Colonic mucosa (tissue), 4 donors: ENCODE measurements at regions of chr2 and their contacts with region 1.

Region 1: GRCh38 chr2:41869542-41870264 is 178.1 kb upstream of the PKDCC start:
- DNase-seq: peak; percentile 84
- H3K4me3 ChIP-seq: no peak overlapping the region
- H3K27ac ChIP-seq: no peak overlapping the region
- H3K4me1 ChIP-seq: no peaks in the 10 kb centered on the region
- H3K27me3 ChIP-seq: no peaks in the 10 kb centered on the region
- CTCF ChIP-seq: peak; percentile 75

Region 2: GRCh38 chr2:41207578-41207977 is 662.1 kb before region 1 on chr2:
- intact Hi-C with region 1: no loop called
- DNase-seq: no peak
- H3K4me3 ChIP-seq: no peak overlapping the region
- H3K27ac ChIP-seq: no peak overlapping the region
- H3K4me1 ChIP-seq: no peaks in the 10 kb centered on the region
- H3K27me3 ChIP-seq: no peaks in the 10 kb centered on the region
- CTCF ChIP-seq: no peak

Region 3: GRCh38 chr2:42086500-42086953 is 216.8 kb after region 1 on chr2:
- intact Hi-C with region 1: loop called (anchors 2 kb)
- DNase-seq: peak; percentile 76
- H3K4me3 ChIP-seq: no peak overlapping the region
- H3K27ac ChIP-seq: no peak overlapping the region
- H3K4me1 ChIP-seq: no peaks in the 10 kb centered on the region
- H3K27me3 ChIP-seq: no peaks in the 10 kb centered on the region
- CTCF ChIP-seq: peak; percentile 58

Region 4: DNA sequence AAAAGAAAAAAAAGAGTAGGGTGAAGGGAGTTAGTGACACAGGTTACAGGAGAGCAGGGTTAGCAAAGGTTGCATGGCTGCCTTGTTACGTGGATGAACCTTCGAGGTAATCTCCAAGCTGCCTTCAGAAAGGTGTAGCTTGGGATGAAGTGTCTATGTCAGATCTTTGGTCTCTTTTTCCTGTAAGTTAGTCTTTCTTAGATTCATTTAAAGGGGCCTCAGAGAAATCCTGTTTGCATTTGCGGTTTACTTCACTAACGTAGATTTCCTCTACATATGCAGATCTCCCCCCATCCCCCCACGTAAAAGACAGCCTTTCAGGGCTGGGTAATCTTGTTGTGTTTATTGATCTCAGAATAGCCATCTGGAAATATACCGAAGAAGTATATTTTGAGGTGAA is 782.4 kb after region 1 on chr2:
- intact Hi-C with region 1: no loop called
- DNase-seq: no peak
- H3K4me3 ChIP-seq: no peak overlapping the region
- H3K27ac ChIP-seq: no peak overlapping the region
- H3K4me1 ChIP-seq: no peaks in the 10 kb centered on the region
- H3K27me3 ChIP-seq: no peaks in the 10 kb centered on the region
- CTCF ChIP-seq: no peak